ENCODE measurements at regions of chr18 and their contacts with region 1.

Region 1: DNA sequence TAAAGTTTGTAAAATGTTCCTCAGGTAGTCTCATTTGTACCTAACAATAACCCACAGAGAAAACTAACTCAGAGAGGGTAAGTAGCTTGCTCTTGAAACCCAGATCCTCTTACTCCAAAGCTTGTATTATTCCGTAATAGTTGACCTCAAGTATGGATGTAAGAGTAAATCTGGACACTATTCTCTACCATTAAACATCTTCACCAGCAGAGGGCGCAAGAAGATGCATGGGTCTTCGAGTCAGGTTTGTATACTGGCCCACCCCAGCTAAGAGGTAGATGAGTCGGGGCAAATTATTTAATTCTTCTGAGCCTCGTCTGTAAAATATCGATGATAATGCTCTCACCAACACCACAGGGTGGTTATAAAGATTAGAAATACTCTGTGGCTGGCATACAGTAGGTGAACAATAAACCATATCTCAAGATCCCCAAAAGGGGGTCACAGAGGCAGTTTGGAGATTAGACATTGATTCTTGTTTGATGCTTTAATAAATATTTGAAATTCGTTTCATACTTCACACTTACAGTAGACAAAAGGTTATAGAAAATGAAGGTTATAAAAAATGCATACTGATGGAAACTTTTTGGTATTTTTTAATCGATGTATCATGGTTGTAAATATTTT is 3.5 kb upstream of the CABLES1 start:
- DNase-seq: peak; percentile 81
- H3K4me3 ChIP-seq: no peak overlapping the region
- H3K27ac ChIP-seq: no peak overlapping the region
- H3K4me1 ChIP-seq: peaks cover 25% of the 10 kb centered on the region
- H3K27me3 ChIP-seq: no peaks in the 10 kb centered on the region
- CTCF ChIP-seq: peak; percentile 62 to 71
- POLR2A ChIP-seq: no peak

Region 2: DNA sequence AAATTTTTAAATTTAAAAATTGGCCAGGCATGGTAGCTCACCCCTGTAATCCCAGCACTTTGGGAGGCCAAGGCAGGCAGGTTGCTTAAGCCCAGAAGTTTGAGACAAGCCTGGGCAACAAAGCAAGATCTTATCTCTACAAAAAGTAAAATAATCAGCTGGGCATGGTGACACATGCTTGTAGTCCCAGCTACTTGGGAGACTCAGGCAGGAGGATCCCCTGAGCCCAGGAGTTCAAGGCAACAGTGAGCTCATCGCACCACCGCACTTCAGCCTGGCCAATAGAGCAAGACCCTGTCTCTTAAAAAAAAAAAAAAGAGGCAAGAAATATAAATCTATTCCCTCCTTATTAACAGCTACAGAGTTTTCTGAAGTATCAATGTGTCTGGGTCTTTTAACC is 1583.2 kb before region 1 on chr18:
- CTCF ChIA-PET with region 1: no interaction called
- POLR2A ChIA-PET with region 1: no interaction called
- dilution Hi-C with region 1: no loop called
- intact Hi-C with region 1: no loop called
- DNase-seq: no peak
- H3K4me3 ChIP-seq: no peak overlapping the region
- H3K27ac ChIP-seq: no peak overlapping the region
- H3K4me1 ChIP-seq: no peaks in the 10 kb centered on the region
- H3K27me3 ChIP-seq: no peaks in the 10 kb centered on the region
- CTCF ChIP-seq: no peak
- POLR2A ChIP-seq: no peak

Region 3: DNA sequence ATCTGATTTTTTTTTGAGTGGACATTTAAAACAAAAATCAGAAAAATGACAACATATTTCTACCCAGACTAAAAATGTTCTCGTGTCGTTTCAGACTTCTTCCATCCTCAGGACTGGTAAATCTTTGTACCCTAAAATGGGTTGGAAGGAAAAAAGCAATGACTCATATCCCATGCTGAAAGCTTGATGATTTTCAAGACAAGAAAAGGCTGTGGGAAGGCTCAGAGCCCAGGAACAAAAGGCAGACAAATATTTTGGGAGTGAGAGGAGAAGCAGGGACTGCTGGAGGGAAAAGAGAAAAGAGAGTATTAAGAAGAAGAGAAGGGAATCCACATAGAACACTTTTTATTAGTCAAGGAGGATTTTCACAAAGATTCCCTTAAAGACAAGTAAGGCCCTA is 637.0 kb before region 1 on chr18:
- CTCF ChIA-PET with region 1: no interaction called
- POLR2A ChIA-PET with region 1: no interaction called
- dilution Hi-C with region 1: no loop called
- intact Hi-C with region 1: no loop called
- DNase-seq: peak; percentile 70
- H3K4me3 ChIP-seq: no peak overlapping the region
- H3K27ac ChIP-seq: peak overlapping the region; percentile 23
- H3K4me1 ChIP-seq: peaks cover 9% of the 10 kb centered on the region
- H3K27me3 ChIP-seq: no peaks in the 10 kb centered on the region
- CTCF ChIP-seq: no peak
- POLR2A ChIP-seq: no peak

Region 4: DNA sequence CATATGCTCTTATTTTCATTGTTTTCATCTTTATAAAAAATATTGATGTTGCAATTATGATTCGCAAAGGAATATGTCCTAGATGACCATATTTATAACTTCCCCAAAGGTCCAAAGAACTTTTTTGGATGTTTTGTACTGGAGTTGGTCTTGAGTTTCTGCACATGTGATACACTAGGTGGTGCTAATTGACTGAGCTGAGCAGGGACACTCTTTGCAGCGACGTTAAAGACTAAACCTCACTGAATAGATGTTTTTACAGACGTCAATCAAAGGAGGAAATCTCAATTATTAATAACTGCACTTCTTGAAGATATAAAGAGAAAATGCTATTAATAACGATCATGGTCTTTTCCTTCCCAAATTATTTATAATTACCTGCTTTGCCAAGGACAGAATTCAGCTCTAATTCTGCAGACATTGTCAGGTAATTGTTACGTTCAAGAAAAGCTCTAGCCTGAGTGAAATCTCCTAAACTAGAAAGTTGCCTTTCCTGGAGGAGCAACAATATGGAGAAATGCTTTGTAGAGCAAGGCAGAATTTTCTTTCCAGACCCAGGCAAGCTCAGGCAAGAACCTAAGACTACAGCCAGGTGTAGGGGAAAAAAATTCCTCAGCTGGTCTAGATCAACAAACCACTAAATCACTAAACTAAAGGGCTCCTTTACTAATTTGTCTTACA is 318.0 kb before region 1 on chr18:
- CTCF ChIA-PET with region 1: interaction called, 6 read pairs
- POLR2A ChIA-PET with region 1: no interaction called
- dilution Hi-C with region 1: no loop called
- intact Hi-C with region 1: loop called (anchors 5 kb)
- DNase-seq: peak; percentile 56
- H3K4me3 ChIP-seq: no peak overlapping the region
- H3K27ac ChIP-seq: no peak overlapping the region
- H3K4me1 ChIP-seq: peaks cover 11% of the 10 kb centered on the region
- H3K27me3 ChIP-seq: peaks cover 30 to 44% of the 10 kb centered on the region in 2 experiments
- CTCF ChIP-seq: peak; percentile 22 to 46
- POLR2A ChIP-seq: no peak

Region 5: DNA sequence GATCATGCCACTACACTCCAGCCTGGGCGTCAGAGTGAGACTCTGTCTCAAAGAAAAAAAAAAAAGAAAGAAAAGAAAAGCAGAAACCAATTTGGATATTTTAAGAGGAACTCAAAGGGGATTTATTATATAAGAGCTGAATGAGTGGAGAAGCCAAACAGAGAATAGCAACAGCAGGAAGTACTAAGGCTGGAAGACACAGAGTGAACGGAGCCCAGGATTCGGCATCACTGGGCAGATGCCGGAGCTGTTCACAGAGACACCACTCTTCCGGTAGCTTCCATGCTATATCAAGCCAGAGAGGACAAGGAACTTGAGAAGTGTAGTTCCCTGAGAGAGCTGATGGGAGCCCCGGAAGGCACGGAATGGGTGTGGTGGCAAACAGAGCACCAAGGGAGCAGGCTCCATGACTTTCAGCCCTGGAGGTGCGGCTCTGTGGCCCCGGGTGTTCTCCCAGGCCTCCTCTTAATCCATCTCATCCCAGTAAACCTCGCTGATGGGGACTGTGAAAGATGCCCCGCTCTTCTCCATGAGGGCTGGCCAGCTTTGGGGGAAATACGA is 43.4 kb before region 1 on chr18:
- CTCF ChIA-PET with region 1: interaction called, 14 read pairs
- POLR2A ChIA-PET with region 1: no interaction called
- dilution Hi-C with region 1: no loop called
- intact Hi-C with region 1: no loop called
- DNase-seq: no peak
- H3K4me3 ChIP-seq: no peak overlapping the region
- H3K27ac ChIP-seq: no peak overlapping the region
- H3K4me1 ChIP-seq: peaks cover 3% of the 10 kb centered on the region
- H3K27me3 ChIP-seq: peaks cover 0 to 2% of the 10 kb centered on the region in 2 experiments
- CTCF ChIP-seq: no peak
- POLR2A ChIP-seq: no peak

Region 6: GRCh38 chr18:23194155-23194996 is 62.6 kb after region 1 on chr18:
- CTCF ChIA-PET with region 1: interaction called, 9 read pairs
- POLR2A ChIA-PET with region 1: no interaction called
- dilution Hi-C with region 1: no loop called
- intact Hi-C with region 1: loop called (anchors 1 kb)
- DNase-seq: peak; percentile 44
- H3K4me3 ChIP-seq: no peak overlapping the region
- H3K27ac ChIP-seq: peak overlapping the region; percentile 49
- H3K4me1 ChIP-seq: peaks cover 35% of the 10 kb centered on the region
- H3K27me3 ChIP-seq: no peaks in the 10 kb centered on the region
- CTCF ChIP-seq: no peak
- POLR2A ChIP-seq: no peak

Region 7: DNA sequence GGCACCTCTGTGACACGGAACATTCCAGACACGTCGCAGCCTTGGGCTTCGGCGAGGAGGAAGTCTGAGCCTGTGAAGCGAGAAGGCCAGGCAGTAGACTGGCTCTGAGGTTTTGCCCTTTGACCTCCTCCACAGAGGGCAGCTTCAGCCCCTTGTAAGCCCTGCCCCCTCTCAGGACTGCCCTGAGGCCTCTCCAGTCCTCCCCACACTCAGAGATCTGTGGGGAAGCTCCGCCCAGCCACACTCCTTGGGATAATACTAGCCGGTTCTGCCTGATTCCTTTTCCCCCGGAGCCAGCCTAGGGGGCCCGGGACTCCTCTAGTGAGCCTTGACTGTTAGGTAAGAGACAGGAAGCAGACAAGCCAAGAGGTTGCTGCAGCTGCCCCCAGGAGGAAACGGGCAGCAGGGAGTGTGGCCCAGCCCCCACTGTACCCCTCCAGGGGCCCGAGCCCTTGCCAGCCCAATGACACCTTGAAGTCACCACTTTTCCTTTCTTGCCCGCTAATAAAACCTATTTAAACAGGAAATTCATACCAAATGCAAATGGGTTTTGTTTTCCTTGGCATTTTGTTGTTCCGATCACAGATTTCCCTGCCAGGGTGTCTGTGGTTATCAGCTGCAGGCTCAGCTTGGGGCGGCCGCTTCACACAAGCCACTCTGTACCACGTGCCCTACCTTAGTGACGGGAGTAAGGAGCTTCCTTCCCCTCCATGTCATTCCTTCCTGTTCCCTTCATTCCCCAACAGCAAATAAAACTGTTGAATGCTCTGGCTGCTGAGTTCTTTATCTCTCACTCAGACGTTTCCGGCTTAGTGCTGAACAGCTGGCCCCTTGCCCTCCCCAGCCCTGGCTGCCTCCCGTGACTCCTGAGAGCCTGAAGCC is 128.1 kb after region 1 on chr18:
- CTCF ChIA-PET with region 1: interaction called, 16 read pairs
- POLR2A ChIA-PET with region 1: no interaction called
- dilution Hi-C with region 1: no loop called
- intact Hi-C with region 1: loop called (anchors 1 kb)
- DNase-seq: peak; percentile 99
- H3K4me3 ChIP-seq: no peak overlapping the region
- H3K27ac ChIP-seq: peak overlapping the region; percentile 87
- H3K4me1 ChIP-seq: peaks cover 36% of the 10 kb centered on the region
- H3K27me3 ChIP-seq: no peaks in the 10 kb centered on the region
- CTCF ChIP-seq: no peak
- POLR2A ChIP-seq: peak; percentile 50

Region 8: DNA sequence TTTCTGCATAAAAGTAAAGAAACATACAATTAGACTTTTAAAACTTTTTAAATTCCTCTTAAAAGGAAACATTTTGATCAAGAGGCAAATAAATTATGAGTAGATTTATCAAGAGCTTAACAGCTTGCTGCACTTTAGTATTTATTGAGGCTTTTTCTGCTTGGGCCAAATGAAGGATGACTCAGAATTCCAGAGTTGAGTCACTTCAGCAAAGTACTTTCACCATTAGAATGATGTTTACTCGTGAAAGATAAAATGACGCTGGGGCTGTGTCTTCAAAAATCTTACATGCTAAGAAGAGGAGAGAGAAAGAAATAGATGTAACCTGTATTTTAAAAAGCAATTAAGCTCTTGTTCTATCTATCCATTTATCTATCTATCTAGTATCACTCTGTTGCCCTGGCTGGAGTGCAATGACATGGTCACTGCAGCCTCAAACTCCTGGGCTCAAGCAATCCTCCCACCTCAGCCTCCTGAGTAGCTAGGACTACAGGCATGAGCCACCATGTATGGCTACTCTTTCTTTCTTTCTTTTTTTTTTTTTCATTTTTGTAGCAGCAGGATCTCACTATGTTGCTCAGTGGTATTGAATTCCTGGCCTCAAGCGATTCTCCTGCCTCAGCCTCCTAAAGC is 246.0 kb after region 1 on chr18:
- CTCF ChIA-PET with region 1: interaction called, 74 read pairs
- POLR2A ChIA-PET with region 1: interaction called, 4 read pairs
- dilution Hi-C with region 1: no loop called
- intact Hi-C with region 1: loop called (anchors 1 kb)
- DNase-seq: peak; percentile 90
- H3K4me3 ChIP-seq: no peak overlapping the region
- H3K27ac ChIP-seq: peak overlapping the region; percentile 78
- H3K4me1 ChIP-seq: peaks cover 36% of the 10 kb centered on the region
- H3K27me3 ChIP-seq: no peaks in the 10 kb centered on the region
- CTCF ChIP-seq: no peak
- POLR2A ChIP-seq: no peak

Region 9: GRCh38 chr18:23452728-23453679 is 321.2 kb after region 1 on chr18 and contains the start of gene RIOK3:
- CTCF ChIA-PET with region 1: interaction called, 3 read pairs
- POLR2A ChIA-PET with region 1: no interaction called
- dilution Hi-C with region 1: no loop called
- intact Hi-C with region 1: loop called (anchors 5 kb)
- DNase-seq: peak; percentile 94
- H3K4me3 ChIP-seq: peak within 1 kb of the TSS; percentile 61 to 80 (median 79)
- H3K27ac ChIP-seq: peak within 1 kb of the TSS; percentile 81
- H3K4me1 ChIP-seq: peaks cover 14% of the 10 kb centered on the region
- H3K27me3 ChIP-seq: no peaks in the 10 kb centered on the region
- CTCF ChIP-seq: no peak
- POLR2A ChIP-seq: peak; percentile 62
- total RNA-seq, gene RIOK3: 50.7 and 55.7 TPM in 2 replicates